ENCODE measurements at regions of chr22 and their contacts with region 1.

Region 1: GRCh38 chr22:20568989-20569769 is 61.8 kb downstream of the MED15 start:
- DNase-seq: peak; percentile 91
- ATAC-seq: peak; percentile 85
- H3K4me3 Mint-ChIP-seq: peak overlapping the region; percentile 53
- H3K27ac Mint-ChIP-seq: peak overlapping the region; percentile 89
- H3K4me1 Mint-ChIP-seq: peaks cover 83% of the 10 kb centered on the region
- H3K27me3 Mint-ChIP-seq: no peaks in the 10 kb centered on the region

Region 2: DNA sequence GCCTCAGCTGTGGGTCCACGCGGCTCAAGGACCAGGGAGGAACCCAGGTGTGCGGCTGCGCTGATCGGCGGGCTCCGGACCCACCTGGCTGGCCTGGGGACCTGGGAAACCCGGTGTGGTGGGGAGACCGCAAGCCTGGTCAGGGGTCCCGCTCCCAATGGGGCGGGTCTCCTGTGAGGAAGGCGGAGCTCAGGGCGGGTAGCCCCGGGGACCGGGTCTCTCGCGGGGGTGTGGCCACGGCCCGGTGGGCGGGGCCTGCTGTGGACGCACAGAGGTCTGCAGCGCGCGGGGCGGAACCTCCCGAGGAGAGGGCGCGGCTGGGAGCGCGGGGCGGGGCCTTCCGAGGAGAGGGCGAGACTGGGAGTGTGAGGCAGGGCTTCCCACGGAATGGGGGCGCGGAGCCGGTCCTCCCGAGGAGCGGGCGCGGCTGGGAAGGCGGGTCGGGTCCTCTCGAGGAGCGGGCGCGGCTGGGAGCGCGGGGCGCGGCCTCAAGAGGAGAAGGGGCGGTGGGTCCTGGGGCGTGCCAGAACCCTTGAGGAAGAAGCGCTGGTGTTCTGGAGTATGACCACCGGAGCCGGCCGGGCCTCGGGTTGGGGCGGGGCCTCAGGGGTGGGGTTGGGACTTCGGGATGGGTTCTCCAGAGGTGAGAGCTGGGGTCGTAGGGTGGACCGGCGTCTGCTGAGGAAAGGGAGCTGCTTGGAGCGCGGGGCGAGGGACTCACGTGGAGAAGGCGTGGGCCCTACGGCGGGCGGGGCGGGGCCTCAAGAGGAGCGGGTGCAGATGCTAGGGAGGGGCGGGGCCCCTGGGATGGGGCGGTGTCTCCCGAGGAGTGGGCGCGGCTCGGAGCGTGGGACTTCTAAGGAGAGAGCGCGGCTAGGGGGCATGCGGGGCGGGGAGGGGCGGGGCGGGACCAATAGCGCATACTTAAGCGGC is 270.1 kb before region 1 on chr22:
- CTCF ChIA-PET with region 1: no interaction called
- POLR2A ChIA-PET with region 1: no interaction called
- DNase-seq: peak; percentile 91
- ATAC-seq: peak; percentile 93
- H3K4me3 Mint-ChIP-seq: peak overlapping the region; percentile 75
- H3K27ac Mint-ChIP-seq: no peak overlapping the region
- H3K4me1 Mint-ChIP-seq: peaks cover 6% of the 10 kb centered on the region
- H3K27me3 Mint-ChIP-seq: peaks cover 17% of the 10 kb centered on the region

Region 3: GRCh38 chr22:20418211-20418788 is 150.9 kb before region 1 on chr22:
- CTCF ChIA-PET with region 1: interaction called, 10 read pairs
- POLR2A ChIA-PET with region 1: interaction called, 3 read pairs
- DNase-seq: peak; percentile 80
- ATAC-seq: peak; percentile 87
- H3K4me3 Mint-ChIP-seq: peak overlapping the region; percentile 44
- H3K27ac Mint-ChIP-seq: no peak overlapping the region
- H3K4me1 Mint-ChIP-seq: peaks cover 5% of the 10 kb centered on the region
- H3K27me3 Mint-ChIP-seq: peaks cover 2% of the 10 kb centered on the region

Region 4: GRCh38 chr22:20495861-20496681 is 73.1 kb before region 1 on chr22:
- CTCF ChIA-PET with region 1: interaction called, 16 read pairs
- POLR2A ChIA-PET with region 1: no interaction called
- DNase-seq: peak; percentile 93
- ATAC-seq: peak; percentile 98
- H3K4me3 Mint-ChIP-seq: peak overlapping the region; percentile 85
- H3K27ac Mint-ChIP-seq: peak overlapping the region; percentile 84
- H3K4me1 Mint-ChIP-seq: peaks cover 28% of the 10 kb centered on the region
- H3K27me3 Mint-ChIP-seq: no peaks in the 10 kb centered on the region

Region 5: DNA sequence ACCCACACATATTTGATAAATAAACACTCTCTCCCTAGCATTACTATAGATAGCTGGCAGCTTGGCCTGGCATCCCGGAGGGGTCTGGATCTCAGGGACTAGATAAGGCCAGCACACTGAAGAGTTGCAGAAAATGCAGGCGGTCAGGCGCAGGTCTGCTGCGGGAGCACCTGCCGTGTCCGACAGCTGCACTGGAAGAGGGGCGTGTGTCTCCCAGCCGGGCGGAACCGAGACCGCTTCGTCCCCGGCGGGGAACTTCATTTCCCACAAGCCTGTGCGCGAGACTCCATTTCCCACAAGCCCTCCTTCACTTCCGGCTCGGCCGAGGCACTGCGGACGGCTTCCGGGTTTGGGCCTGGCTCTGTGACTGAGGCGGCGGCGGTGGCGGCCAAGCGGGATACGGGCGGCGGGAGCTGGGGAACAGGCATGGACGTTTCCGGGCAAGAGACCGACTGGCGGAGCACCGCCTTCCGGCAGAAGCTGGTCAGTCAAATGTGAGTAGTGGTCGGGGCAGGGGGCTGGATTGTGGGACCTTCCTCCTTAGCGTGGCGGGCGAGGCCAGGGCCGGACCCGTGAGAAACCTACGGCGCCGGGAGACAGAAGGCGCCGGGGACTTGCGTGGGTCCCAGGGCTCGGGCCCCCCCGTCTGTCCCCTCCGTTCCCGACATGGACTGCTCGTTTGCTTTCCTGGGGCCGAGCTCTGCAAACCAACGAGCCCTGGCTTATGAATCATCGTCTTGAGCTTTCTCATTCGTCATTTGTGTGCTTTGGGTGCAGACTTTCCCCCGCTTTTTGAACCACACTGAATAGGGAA is 61.7 kb before region 1 on chr22 and contains the start of gene MED15:
- CTCF ChIA-PET with region 1: interaction called, 98 read pairs
- POLR2A ChIA-PET with region 1: interaction called, 28 read pairs
- DNase-seq: peak; percentile 95
- ATAC-seq: peak; percentile 93
- H3K4me3 Mint-ChIP-seq: peak within 1 kb of the TSS; percentile 90
- H3K27ac Mint-ChIP-seq: peak within 1 kb of the TSS; percentile 92
- H3K4me1 Mint-ChIP-seq: peaks cover 49% of the 10 kb centered on the region
- H3K27me3 Mint-ChIP-seq: no peaks in the 10 kb centered on the region
- total RNA-seq, gene MED15: 155 to 161 TPM

Region 6: GRCh38 chr22:20517422-20517821 is 51.8 kb before region 1 on chr22:
- CTCF ChIA-PET with region 1: interaction called, 98 read pairs
- POLR2A ChIA-PET with region 1: interaction called, 6 read pairs
- DNase-seq: no peak
- ATAC-seq: peak; percentile 42
- H3K4me3 Mint-ChIP-seq: no peak overlapping the region
- H3K27ac Mint-ChIP-seq: peak overlapping the region; percentile 82
- H3K4me1 Mint-ChIP-seq: peaks cover 64% of the 10 kb centered on the region
- H3K27me3 Mint-ChIP-seq: no peaks in the 10 kb centered on the region

Region 7: DNA sequence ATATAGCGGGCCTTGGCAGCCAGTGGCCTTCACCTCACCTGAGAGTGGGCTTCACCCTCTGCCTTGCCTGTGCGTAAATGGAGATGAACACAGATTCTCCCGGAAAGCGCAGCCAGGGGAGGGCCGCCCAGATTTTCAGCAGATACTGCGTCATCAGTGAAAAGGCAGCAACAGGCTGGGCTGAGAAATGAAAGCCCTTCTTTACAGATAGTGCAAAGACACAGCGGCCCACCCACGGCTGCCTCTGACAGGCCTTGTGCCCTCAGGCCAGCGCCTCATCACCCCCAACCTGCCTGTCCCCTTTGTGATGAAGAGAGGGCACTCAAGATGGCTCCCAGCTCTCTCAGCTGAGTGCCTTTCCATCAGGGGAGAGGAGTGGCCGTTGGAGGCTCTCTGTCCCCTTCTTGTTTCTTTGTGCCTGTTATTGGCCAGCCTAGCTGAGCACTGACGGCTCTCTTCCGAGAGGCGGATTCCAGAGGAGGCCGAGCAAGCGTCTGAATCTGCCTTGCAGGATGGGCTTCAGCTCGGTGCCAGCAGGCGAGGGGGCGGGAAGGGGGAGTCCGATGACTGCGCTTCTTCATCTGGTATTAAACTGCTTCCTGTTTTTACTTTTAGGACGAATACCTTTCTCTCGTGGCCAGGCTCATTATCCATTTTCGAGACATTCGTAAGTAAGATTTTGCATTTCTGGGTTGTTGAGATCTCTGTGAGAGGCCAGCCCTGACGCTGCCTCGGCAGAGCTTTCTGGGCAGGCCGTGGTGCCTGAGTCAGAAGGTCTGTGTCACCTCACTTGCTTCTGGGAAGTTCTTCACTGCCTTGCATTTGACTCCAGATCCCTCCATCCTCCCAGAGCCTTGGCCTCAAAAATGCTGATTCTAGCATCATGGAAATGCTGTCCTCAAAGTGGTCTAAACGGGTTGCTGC is 18.1 kb before region 1 on chr22:
- CTCF ChIA-PET with region 1: interaction called, 465 read pairs
- POLR2A ChIA-PET with region 1: interaction called, 24 read pairs
- DNase-seq: peak; percentile 61
- ATAC-seq: peak; percentile 25
- H3K4me3 Mint-ChIP-seq: peak overlapping the region; percentile 76
- H3K27ac Mint-ChIP-seq: peak overlapping the region; percentile 96
- H3K4me1 Mint-ChIP-seq: peaks cover 92% of the 10 kb centered on the region
- H3K27me3 Mint-ChIP-seq: no peaks in the 10 kb centered on the region

Region 8: GRCh38 chr22:20581503-20582170 is 12.5 kb after region 1 on chr22:
- CTCF ChIA-PET with region 1: interaction called, 12 read pairs
- POLR2A ChIA-PET with region 1: interaction called, 3 read pairs
- DNase-seq: no peak
- ATAC-seq: no peak
- H3K4me3 Mint-ChIP-seq: no peak overlapping the region
- H3K27ac Mint-ChIP-seq: peak overlapping the region; percentile 25
- H3K4me1 Mint-ChIP-seq: peaks cover 7% of the 10 kb centered on the region
- H3K27me3 Mint-ChIP-seq: no peaks in the 10 kb centered on the region

Region 9: GRCh38 chr22:20792947-20793294 is 223.7 kb after region 1 on chr22:
- CTCF ChIA-PET with region 1: no interaction called
- POLR2A ChIA-PET with region 1: no interaction called
- DNase-seq: no peak
- ATAC-seq: no peak
- H3K4me3 Mint-ChIP-seq: no peak overlapping the region
- H3K27ac Mint-ChIP-seq: no peak overlapping the region
- H3K4me1 Mint-ChIP-seq: no peaks in the 10 kb centered on the region
- H3K27me3 Mint-ChIP-seq: no peaks in the 10 kb centered on the region

Measured in activated CD8-positive, alpha-beta T cell treated with anti-CD3 and anti-CD28 coated beads, Interleukin-2, amount 10 ng/mL, durations not matched to agents 7 days and 5 days (primary cell).